ENCODE measurements at regions of chr7 and their contacts with region 1.

Region 1: GRCh38 chr7:101542527-101543241 is 86.4 kb downstream of the MYL10 start:
- DNase-seq: peak; percentile 54 to 65 (median 55)
- H3K4me3 ChIP-seq: no peak overlapping the region
- H3K4me3 Mint-ChIP-seq: no peak overlapping the region
- H3K27ac ChIP-seq: no peak overlapping the region
- H3K27ac Mint-ChIP-seq: no peak overlapping the region
- H3K4me1 ChIP-seq: no peaks in the 10 kb centered on the region
- H3K4me1 Mint-ChIP-seq: peaks cover 0 to 4% (median 1%) of the 10 kb centered on the region in 4 donors
- H3K27me3 ChIP-seq: no peaks in the 10 kb centered on the region
- H3K27me3 Mint-ChIP-seq: peaks cover 2 to 3% of the 10 kb centered on the region in 2 donors

Region 2: DNA sequence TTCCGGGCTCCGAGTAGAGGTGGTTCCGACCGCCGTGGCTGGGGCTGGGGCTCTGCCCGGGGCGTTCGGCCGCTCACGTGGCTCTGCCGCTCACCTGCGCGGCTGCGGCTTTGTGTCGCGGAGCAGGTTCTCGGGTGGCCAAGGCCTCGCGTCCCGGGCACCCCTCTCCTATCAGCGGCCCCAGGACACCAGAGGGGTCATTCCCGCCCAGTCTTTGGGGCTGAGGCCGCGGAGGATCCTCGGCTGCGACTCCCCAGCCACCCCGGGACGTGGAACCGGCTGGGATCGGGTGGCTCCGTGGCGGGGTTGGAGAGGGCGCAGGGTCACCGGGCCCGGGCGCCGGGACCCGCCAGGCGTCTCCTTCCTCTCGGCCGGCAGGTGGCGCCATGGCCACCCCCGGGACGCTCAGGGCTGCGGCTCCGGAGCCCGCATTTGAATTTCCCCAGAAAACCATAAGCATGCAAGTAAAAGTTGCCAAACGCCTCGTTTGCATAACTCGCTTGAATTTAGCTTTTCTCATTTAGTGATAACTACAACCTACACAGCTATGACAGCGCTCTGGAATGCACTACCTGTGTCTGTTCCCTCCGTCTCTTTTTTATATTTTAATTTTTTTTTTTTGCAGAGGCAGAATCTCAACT is 178.8 kb before region 1 on chr7:
- CTCF ChIA-PET with region 1: interaction called, 4 read pairs
- POLR2A ChIA-PET with region 1: no interaction called
- intact Hi-C with region 1: loop called (anchors 2 kb)
- DNase-seq: peak; percentile 54 to 69 (median 63)
- H3K4me3 ChIP-seq: peak overlapping the region in 1 of 2 donors; percentile 28
- H3K4me3 Mint-ChIP-seq: peak overlapping the region in 6 of 8 donors; percentile 39 to 54 (median 43)
- H3K27ac ChIP-seq: no peak overlapping the region
- H3K27ac Mint-ChIP-seq: no peak overlapping the region
- H3K4me1 ChIP-seq: peaks cover 6% of the 10 kb centered on the region
- H3K4me1 Mint-ChIP-seq: peaks cover 0 to 5% (median 0%) of the 10 kb centered on the region in 4 donors
- H3K27me3 ChIP-seq: peaks cover 13% of the 10 kb centered on the region
- H3K27me3 Mint-ChIP-seq: peaks cover 18 to 25% of the 10 kb centered on the region in 2 donors

Region 3: DNA sequence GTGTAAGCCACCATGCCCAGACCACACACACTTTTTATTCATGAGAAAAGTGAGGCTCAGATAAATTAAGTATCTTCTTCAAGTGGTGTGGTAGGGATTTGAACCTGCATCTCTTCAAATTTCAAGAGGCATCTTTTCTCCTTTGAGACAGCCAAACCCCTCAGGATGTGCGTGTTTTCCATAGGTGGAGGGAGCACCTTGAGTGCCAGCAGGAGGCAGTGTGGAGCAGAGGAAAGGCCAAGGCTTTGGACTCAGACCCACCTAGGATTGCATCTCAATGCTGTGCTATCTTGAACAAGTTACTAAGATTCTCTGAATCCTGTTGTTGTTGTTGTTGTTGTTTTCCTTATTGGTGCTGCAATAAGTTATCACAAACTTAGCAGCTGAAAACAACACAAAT is 126.6 kb after region 1 on chr7:
- CTCF ChIA-PET with region 1: no interaction called
- POLR2A ChIA-PET with region 1: no interaction called
- intact Hi-C with region 1: no loop called
- DNase-seq: no peak
- H3K4me3 ChIP-seq: no peak overlapping the region
- H3K4me3 Mint-ChIP-seq: no peak overlapping the region
- H3K27ac ChIP-seq: no peak overlapping the region
- H3K27ac Mint-ChIP-seq: no peak overlapping the region
- H3K4me1 ChIP-seq: no peaks in the 10 kb centered on the region
- H3K4me1 Mint-ChIP-seq: no peaks in the 10 kb centered on the region
- H3K27me3 ChIP-seq: no peaks in the 10 kb centered on the region
- H3K27me3 Mint-ChIP-seq: peaks cover 4% of the 10 kb centered on the region in 2 donors

Region 4: DNA sequence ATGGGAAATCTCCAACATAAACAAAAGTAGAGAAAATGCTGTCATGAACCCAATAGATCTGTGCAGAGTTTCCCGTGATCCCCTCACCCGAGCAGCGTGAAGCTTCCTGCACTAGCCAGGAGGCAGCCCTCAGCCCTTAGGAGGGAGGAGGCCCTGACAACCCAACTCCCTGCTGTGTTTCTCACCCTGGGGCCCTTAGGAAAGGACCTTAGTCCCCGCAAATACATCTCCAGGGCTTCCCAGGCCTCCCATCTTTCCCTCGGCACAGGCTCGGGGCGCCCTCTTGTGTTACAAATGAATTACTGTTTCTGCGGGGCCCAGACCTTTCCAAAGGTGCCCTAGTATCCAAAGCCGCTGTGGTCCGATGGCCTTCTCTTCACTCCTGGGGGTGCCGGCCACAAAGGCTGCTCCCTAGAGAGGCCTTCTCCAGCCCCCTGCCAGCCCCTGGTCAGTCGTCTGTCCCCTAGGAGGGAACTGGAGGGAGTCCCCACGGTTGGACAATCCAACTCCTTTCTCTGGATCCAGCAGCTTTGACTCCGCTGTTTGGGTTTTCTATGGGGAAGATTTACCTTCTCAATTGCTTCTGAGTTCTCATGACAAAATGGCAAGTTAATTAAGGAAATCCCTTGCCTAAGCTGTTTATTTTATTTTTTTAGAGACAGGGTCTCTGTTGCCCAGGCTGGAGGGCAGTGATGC is 694.1 kb after region 1 on chr7:
- CTCF ChIA-PET with region 1: interaction called, 5 read pairs
- POLR2A ChIA-PET with region 1: no interaction called
- intact Hi-C with region 1: loop called (anchors 1 kb)
- DNase-seq: peak in 4 of 5 donors; percentile 17 to 39 (median 29)
- H3K4me3 ChIP-seq: no peak overlapping the region
- H3K4me3 Mint-ChIP-seq: no peak overlapping the region
- H3K27ac ChIP-seq: no peak overlapping the region
- H3K27ac Mint-ChIP-seq: peak overlapping the region in 1 of 7 donors; percentile 60
- H3K4me1 ChIP-seq: no peaks in the 10 kb centered on the region
- H3K4me1 Mint-ChIP-seq: no peaks in the 10 kb centered on the region
- H3K27me3 ChIP-seq: no peaks in the 10 kb centered on the region
- H3K27me3 Mint-ChIP-seq: no peaks in the 10 kb centered on the region

Region 5: GRCh38 chr7:102272075-102272917 is 729.6 kb after region 1 on chr7:
- CTCF ChIA-PET with region 1: interaction called, 71 read pairs
- POLR2A ChIA-PET with region 1: no interaction called
- intact Hi-C with region 1: no loop called
- DNase-seq: peak; percentile 61 to 66 (median 64)
- H3K4me3 ChIP-seq: no peak overlapping the region
- H3K4me3 Mint-ChIP-seq: no peak overlapping the region
- H3K27ac ChIP-seq: no peak overlapping the region
- H3K27ac Mint-ChIP-seq: no peak overlapping the region
- H3K4me1 ChIP-seq: no peaks in the 10 kb centered on the region
- H3K4me1 Mint-ChIP-seq: peaks cover 3 to 4% (median 3%) of the 10 kb centered on the region in 4 donors
- H3K27me3 ChIP-seq: no peaks in the 10 kb centered on the region
- H3K27me3 Mint-ChIP-seq: no peaks in the 10 kb centered on the region

Region 6: GRCh38 chr7:102390697-102391484 is 848.2 kb after region 1 on chr7:
- CTCF ChIA-PET with region 1: no interaction called
- POLR2A ChIA-PET with region 1: no interaction called
- intact Hi-C with region 1: loop called (anchors 2 kb)
- DNase-seq: peak; percentile 57 to 63 (median 60)
- H3K4me3 ChIP-seq: no peak overlapping the region
- H3K4me3 Mint-ChIP-seq: no peak overlapping the region
- H3K27ac ChIP-seq: no peak overlapping the region
- H3K27ac Mint-ChIP-seq: peak overlapping the region in 1 of 7 donors; percentile 37
- H3K4me1 ChIP-seq: peaks cover 6% of the 10 kb centered on the region
- H3K4me1 Mint-ChIP-seq: peaks cover 5 to 8% (median 6%) of the 10 kb centered on the region in 4 donors
- H3K27me3 ChIP-seq: no peaks in the 10 kb centered on the region
- H3K27me3 Mint-ChIP-seq: no peaks in the 10 kb centered on the region

Measured in CD4-positive, alpha-beta memory T cell (primary cell).